ENCODE measurements at regions of chr5 and their contacts with region 1.

Region 1: GRCh38 chr5:151080623-151081430 is at the start of gene TNIP1:
- DNase-seq: peak; percentile 94
- H3K4me3 Mint-ChIP-seq: peak within 1 kb of the TSS; percentile 83
- H3K27ac Mint-ChIP-seq: peak within 1 kb of the TSS; percentile 93
- H3K4me1 Mint-ChIP-seq: peaks cover 72% of the 10 kb centered on the region
- H3K27me3 Mint-ChIP-seq: no peaks in the 10 kb centered on the region
- total RNA-seq, gene TNIP1: 238 to 263 TPM

Region 2: GRCh38 chr5:149357370-149358293 is 1723.2 kb before region 1 on chr5 and contains the start of gene PCYOX1L:
- CTCF ChIA-PET with region 1: no interaction called
- intact Hi-C with region 1: loop called (anchors 5 kb)
- DNase-seq: peak; percentile 95
- H3K4me3 Mint-ChIP-seq: peak within 1 kb of the TSS; percentile 95
- H3K27ac Mint-ChIP-seq: peak within 1 kb of the TSS; percentile 90
- H3K4me1 Mint-ChIP-seq: peaks cover 61% of the 10 kb centered on the region
- H3K27me3 Mint-ChIP-seq: no peaks in the 10 kb centered on the region
- total RNA-seq, gene PCYOX1L: 19.9 to 21.0 TPM

Region 3: DNA sequence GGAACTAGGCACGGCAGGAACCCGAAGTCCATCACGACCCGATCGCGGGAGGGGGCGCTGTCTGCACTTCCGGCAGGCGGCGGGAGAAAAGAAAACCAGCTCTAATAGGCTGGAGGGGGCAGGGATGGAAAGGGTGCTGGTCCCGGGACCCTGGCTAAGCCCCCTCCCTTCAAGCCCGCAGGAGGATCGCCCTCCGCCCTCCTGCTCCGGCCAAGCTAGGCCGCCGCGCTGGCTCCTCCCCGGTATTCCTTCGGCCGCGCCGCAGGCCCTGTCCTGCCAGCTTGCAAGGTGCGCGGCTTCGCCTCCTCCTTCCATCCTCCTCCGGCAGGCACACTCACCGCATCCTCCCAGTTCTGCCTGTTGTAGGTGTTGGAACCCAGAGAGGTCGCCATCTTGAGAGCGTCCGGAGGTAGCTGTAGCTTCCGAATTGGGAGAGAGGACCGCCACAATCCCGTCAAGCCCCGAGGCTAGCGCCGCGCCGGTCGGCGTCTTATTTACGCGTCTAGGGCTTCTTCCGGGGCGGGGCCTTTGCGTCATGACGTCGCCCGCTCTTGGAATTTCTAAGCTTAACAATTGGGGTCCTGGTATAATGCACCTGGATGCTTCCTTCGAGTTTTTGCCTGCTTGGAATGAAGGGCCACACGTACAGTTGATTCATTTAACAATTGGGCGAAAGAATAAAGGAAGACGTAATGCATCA is 380.1 kb before region 1 on chr5 and contains the start of gene RBM22:
- CTCF ChIA-PET with region 1: no interaction called
- intact Hi-C with region 1: loop called (anchors 1 kb)
- DNase-seq: peak; percentile 95
- H3K4me3 Mint-ChIP-seq: no peak within 1 kb of the TSS
- H3K27ac Mint-ChIP-seq: no peak within 1 kb of the TSS
- H3K4me1 Mint-ChIP-seq: peaks cover 8% of the 10 kb centered on the region
- H3K27me3 Mint-ChIP-seq: no peaks in the 10 kb centered on the region
- total RNA-seq, gene RBM22: 86.2 to 88.2 TPM

Region 4: GRCh38 chr5:151058891-151059489 is 21.8 kb before region 1 on chr5:
- CTCF ChIA-PET with region 1: interaction called, 3 read pairs
- intact Hi-C with region 1: loop called (anchors 1 kb)
- DNase-seq: peak; percentile 27
- H3K4me3 Mint-ChIP-seq: peak overlapping the region; percentile 19
- H3K27ac Mint-ChIP-seq: peak overlapping the region; percentile 93
- H3K4me1 Mint-ChIP-seq: peaks cover 49% of the 10 kb centered on the region
- H3K27me3 Mint-ChIP-seq: no peaks in the 10 kb centered on the region

Region 5: DNA sequence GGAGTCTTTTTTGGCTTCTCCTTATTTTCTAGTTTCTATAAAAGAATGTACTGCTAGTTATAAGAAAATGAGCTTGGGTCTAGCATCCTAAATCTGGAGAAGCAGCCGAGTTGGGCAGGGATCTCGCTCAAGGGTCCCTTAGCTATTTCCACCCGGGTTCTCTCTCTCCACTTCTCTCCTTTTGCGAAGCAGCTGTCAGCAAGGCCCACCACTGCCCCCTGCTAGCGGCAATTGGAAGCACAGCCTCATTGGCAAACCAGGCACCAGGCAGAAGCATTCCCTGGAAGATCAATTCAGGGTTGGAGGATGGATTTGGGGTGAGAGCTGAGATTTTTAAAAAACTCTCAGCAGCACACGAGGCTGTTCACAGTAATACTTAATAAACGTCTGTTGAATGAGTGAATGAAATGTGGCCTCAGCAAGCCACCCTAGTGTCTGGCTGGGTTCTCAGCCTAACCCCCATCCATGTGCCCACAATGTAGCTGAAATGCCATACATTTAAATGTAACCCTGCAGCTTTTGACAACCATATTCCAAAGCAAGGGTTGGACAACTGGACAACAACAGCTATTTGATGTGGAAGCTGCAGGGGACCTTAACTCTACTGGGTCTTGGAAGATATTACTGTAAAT is 34.6 kb after region 1 on chr5:
- CTCF ChIA-PET with region 1: interaction called, 39 read pairs
- intact Hi-C with region 1: no loop called
- DNase-seq: peak; percentile 84
- H3K4me3 Mint-ChIP-seq: no peak overlapping the region
- H3K27ac Mint-ChIP-seq: no peak overlapping the region
- H3K4me1 Mint-ChIP-seq: peaks cover 3% of the 10 kb centered on the region
- H3K27me3 Mint-ChIP-seq: no peaks in the 10 kb centered on the region

Region 6: GRCh38 chr5:151213800-151214613 is 133.2 kb after region 1 on chr5:
- CTCF ChIA-PET with region 1: interaction called, 3 read pairs
- intact Hi-C with region 1: loop called (anchors 1 kb)
- DNase-seq: peak; percentile 95
- H3K4me3 Mint-ChIP-seq: peak overlapping the region; percentile 83
- H3K27ac Mint-ChIP-seq: peak overlapping the region; percentile 98
- H3K4me1 Mint-ChIP-seq: peaks cover 76% of the 10 kb centered on the region
- H3K27me3 Mint-ChIP-seq: no peaks in the 10 kb centered on the region

Region 7: DNA sequence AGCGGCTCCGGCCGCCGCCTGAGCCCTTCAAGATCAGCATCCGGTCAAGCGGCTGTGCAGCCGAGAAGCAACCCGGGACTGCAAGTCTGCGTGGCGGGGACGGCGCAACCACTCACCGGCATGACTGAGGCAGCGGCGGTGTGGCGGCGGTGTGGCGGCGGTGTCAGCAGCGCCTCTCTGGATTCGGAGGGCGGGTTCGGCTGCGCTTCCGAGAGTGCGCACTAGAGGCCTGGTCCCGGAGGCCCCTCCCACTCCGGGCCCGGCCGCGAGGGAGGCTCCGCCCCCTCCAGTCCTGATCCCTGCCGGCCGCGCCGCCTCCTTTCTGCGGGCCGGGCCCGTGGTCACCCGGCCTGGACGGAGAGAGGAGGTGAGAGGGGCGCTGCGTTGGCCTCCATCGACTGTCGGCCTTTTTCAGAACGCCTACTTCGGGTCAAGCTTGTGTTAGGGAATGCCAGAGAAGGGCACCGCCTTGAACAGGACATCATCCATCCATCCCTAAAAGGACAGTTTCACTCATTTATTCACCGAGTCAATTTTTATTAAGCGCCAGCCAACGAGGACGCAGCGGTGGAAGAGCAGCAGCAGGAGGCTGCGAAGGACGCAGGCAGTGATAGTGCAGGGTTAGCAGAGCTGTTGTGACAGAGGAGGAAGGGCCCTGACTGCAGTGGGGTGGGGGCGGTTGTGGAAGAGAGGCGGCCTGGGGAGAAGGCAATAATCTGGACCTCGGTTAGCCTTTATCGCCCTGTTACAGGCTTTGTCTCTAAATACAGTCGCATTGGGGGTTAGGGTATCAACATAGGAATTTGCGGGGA is 677.8 kb after region 1 on chr5 and contains the start of gene ATOX1:
- CTCF ChIA-PET with region 1: no interaction called
- intact Hi-C with region 1: loop called (anchors 5 kb)
- DNase-seq: peak; percentile 91
- H3K4me3 Mint-ChIP-seq: peak within 1 kb of the TSS; percentile 81
- H3K27ac Mint-ChIP-seq: peak within 1 kb of the TSS; percentile 78
- H3K4me1 Mint-ChIP-seq: peaks cover 30% of the 10 kb centered on the region
- H3K27me3 Mint-ChIP-seq: no peaks in the 10 kb centered on the region
- total RNA-seq, gene ATOX1: 87.7 to 92.6 TPM

Measured in activated naive CD4-positive, alpha-beta T cell treated with anti-CD3 and anti-CD28 coated beads for 36 hours (primary cell).